ENCODE measurements at regions of chr1 and their contacts with region 1.

Region 1: DNA sequence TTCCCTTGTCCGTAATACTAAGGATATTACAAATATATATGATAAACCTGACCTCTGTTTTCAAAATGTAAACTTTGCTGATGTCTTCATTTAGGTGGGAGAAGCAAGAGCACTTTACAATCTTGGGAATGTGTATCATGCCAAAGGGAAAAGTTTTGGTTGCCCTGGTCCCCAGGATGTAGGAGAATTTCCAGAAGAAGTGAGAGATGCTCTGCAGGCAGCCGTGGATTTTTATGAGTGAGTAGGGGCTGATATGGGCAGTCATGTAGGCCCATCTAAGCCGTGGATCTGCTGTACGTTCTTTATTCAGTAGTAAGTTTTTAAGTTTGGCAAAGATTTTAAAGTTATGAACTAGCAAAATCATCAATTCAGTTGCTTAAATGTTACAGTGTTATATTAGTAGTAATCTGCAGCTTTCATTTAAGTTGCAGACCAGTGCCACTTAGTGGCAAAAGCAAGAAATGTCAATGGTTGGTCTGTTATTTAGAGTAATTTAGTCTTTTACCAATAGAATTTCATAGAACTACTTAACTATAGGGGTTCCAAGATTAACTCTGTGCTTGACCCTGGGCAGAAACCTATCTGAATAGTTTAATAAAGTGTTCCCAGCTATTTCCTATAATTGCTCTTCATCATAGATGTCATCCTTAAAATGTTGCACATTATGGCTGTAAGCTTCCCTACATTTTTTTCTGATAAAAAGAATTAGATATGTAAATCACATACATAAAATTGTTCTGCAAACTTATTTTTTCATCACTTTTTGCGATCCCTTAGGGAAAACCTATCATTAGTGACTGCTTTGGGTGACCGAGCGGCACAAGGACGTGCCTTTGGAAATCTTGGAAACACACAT is 21.3 kb downstream of the GPSM2 start:
- DNase-seq: no peak
- ATAC-seq: peak; percentile 82
- H3K4me3 ChIP-seq: no peak overlapping the region
- H3K27ac ChIP-seq: no peak overlapping the region
- H3K4me1 ChIP-seq: no peaks in the 10 kb centered on the region
- H3K27me3 ChIP-seq: no peaks in the 10 kb centered on the region
- CTCF ChIP-seq: peak; percentile 55 to 80 (median 64)
- EP300 ChIP-seq: no peak
- POLR2A ChIP-seq: no peak
- RAD21 ChIP-seq: peak; percentile 86

Region 2: GRCh38 chr1:108746372-108747205 is 151.5 kb before region 1 on chr1 and contains the start of gene STXBP3:
- CTCF ChIA-PET with region 1: no interaction called
- POLR2A ChIA-PET with region 1: no interaction called
- RAD21 ChIA-PET with region 1: no interaction called
- SMC1A ChIA-PET with region 1: no interaction called
- in situ Hi-C with region 1: no loop called
- intact Hi-C with region 1: no loop called
- DNase-seq: peak; percentile 95
- ATAC-seq: peak; percentile 94
- H3K4me3 ChIP-seq: peak within 1 kb of the TSS; percentile 94
- H3K27ac ChIP-seq: peak within 1 kb of the TSS; percentile 87
- H3K4me1 ChIP-seq: no peaks in the 10 kb centered on the region
- H3K27me3 ChIP-seq: no peaks in the 10 kb centered on the region
- CTCF ChIP-seq: peak; percentile 91 to 98 (median 96)
- EP300 ChIP-seq: no peak
- POLR2A ChIP-seq: peak; percentile 97
- RAD21 ChIP-seq: no peak
- polyA plus RNA-seq, gene STXBP3: 21.7 to 23.6 TPM

Region 3: DNA sequence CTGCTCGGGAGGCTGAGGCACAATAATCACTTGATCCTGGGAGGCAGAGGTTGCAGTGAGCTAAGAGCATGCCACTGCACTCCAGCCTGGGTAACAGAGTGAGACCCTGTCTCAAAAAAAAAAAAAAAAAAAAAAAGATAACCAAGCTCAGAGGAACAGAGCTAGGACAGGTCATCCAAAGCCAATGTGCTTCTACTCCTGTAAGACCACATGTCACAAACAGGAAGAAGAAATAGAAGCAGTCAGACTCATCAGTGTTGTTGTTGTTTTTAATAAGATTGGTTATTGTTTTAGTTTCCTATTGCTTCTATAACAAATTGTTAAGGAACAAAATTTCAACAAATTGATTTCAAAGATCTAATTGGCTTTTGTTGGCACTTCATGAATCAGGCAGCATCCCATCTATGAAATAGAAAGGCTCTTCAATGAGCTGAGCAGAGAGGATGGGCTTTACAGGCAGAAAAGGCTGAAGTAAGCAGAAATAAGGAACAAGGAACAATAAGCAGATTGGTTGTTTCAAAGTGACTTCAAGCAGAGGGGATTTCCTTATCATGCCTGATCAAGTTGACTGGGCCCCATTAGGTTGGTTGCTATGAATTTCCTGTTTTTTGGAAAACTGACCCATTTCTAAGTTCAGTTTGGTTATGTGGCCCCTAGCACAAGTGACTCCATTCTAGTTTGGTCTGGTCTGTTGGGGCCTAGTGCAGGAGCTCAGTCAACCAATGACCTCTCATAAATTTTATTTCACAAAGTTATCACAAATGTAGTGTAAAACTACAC is 35.2 kb before region 1 on chr1:
- CTCF ChIA-PET with region 1: interaction called, 5 read pairs
- POLR2A ChIA-PET with region 1: no interaction called
- RAD21 ChIA-PET with region 1: interaction called, 3 read pairs
- SMC1A ChIA-PET with region 1: interaction called, 12 read pairs
- in situ Hi-C with region 1: no loop called
- intact Hi-C with region 1: no loop called
- DNase-seq: no peak
- ATAC-seq: peak; percentile 92
- H3K4me3 ChIP-seq: no peak overlapping the region
- H3K27ac ChIP-seq: no peak overlapping the region
- H3K4me1 ChIP-seq: peaks cover 5% of the 10 kb centered on the region; the same call in 1 of the 2 replicates
- H3K27me3 ChIP-seq: no peaks in the 10 kb centered on the region; a peak in 1 of 4 replicates
- CTCF ChIP-seq: no peak
- EP300 ChIP-seq: no peak
- POLR2A ChIP-seq: no peak
- RAD21 ChIP-seq: no peak

Region 4: DNA sequence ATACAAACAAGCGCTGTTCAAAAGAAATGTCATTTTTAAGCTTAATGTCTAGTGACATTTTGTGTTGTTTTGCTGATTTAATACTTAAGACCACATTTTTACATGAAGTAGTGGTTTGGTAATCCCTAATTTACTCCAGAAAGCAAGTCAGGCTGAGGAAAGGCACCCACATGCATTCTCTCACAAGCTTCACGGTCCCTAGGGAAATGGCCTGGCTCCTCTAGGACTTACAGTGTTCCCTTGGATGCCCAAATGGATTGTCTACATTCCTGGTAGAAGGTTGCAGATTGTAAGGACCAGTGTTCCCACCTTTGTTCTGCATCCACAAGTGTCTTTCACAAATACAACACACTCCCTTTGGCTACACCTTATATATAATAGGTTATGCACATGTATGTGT is 11.8 kb before region 1 on chr1:
- CTCF ChIA-PET with region 1: interaction called, 18 read pairs
- POLR2A ChIA-PET with region 1: interaction called, 3 read pairs
- RAD21 ChIA-PET with region 1: interaction called, 16 read pairs
- SMC1A ChIA-PET with region 1: interaction called, 7 read pairs
- in situ Hi-C with region 1: no loop called
- intact Hi-C with region 1: no loop called
- DNase-seq: no peak
- ATAC-seq: no peak
- H3K4me3 ChIP-seq: no peak overlapping the region
- H3K27ac ChIP-seq: no peak overlapping the region
- H3K4me1 ChIP-seq: no peaks in the 10 kb centered on the region
- H3K27me3 ChIP-seq: no peaks in the 10 kb centered on the region
- CTCF ChIP-seq: no peak
- EP300 ChIP-seq: no peak
- POLR2A ChIP-seq: no peak
- RAD21 ChIP-seq: no peak

Measured in GM12878 (cell line).